ENCODE measurements at regions of chr17 and their contacts with region 1.

Region 1: DNA sequence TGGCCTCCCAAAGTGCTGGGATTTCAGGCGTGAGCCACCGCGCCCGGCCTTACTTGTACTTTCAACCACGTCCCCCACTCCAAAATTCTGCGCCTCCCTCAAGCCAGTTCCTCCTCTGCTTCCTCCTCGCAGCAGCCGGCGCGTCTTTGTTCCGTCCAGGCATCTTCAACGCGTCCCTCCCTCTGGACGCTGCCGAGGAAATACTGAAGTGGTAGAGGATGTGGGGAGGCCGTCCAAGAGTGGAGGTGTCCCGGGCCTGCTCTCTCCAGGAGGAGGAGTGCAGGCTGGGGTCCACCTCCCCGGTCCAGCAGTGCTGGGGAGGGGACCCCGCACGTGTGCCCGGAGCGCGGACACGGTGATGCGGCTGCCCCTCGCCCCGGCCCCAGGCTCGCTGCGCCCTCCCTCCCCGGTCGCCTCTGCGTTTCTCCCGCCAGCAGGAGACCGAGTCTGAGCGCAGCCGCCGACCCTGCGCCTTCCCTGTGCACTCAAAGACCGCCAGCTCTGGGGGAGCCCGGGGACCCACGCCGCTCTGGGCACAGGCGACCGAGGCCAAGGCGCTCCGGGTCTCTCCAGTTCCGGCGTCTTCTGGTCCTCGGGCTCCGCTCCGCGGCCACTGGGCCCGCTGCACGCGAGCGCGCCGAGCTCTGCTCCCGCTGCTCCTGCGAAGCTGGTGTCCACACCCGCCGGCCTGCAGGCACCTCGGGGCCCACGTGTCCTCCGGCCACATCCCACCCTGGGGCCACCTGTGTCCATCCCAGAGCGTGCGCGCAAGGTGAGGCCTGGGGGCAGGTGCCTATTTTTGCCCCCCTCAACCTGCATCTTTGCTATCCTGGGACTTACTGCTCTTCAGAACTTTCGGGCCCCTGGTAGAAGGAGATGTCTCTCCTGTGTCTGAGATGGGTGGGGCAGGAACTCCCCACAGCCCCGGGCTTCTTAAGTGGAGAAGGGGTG is 31.7 kb downstream of the OSBPL7 start:
- DNase-seq: peak; percentile 72
- ATAC-seq: peak; percentile 98
- H3K4me3 ChIP-seq: peak overlapping the region; percentile 57; the same call in 1 of the 2 replicates
- H3K27ac ChIP-seq: no peak overlapping the region
- H3K4me1 ChIP-seq: no peaks in the 10 kb centered on the region
- H3K27me3 ChIP-seq: peaks cover 77% of the 10 kb centered on the region
- CTCF ChIP-seq: peak; percentile 58

Region 2: DNA sequence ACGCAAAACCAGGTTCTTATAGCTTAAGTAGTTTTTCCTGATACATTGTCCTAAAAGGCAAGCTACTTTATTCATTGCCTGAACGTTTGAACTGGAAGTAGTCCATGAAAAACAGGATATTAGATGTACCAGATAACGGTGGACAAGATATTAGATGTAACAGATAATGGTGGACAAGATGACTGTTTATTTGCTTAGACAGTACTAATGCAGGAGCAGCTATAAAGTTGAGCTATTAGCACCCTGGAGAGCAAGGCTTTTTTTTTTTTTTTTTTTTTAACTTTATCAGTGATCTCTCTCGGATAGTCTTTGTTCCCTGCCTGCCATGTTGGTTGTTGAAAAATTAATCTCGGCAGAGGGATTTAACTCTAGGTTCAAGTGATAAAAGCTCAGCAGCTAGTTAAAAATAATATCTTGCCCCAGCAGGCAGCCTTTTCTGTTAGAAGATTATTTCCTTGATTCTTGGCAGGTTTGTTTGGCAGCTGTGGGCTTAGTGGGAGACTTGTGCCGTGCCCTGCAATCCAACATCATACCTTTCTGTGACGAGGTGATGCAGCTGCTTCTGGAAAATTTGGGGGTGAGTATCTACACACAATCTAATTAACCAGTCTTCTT is 113.2 kb before region 1 on chr17:
- CTCF ChIA-PET with region 1: interaction called, 15 read pairs
- POLR2A ChIA-PET with region 1: no interaction called
- intact Hi-C with region 1: no loop called
- DNase-seq: no peak
- ATAC-seq: no peak
- H3K4me3 ChIP-seq: no peak overlapping the region
- H3K27ac ChIP-seq: no peak overlapping the region
- H3K4me1 ChIP-seq: no peaks in the 10 kb centered on the region
- H3K27me3 ChIP-seq: no peaks in the 10 kb centered on the region
- CTCF ChIP-seq: no peak

Region 3: DNA sequence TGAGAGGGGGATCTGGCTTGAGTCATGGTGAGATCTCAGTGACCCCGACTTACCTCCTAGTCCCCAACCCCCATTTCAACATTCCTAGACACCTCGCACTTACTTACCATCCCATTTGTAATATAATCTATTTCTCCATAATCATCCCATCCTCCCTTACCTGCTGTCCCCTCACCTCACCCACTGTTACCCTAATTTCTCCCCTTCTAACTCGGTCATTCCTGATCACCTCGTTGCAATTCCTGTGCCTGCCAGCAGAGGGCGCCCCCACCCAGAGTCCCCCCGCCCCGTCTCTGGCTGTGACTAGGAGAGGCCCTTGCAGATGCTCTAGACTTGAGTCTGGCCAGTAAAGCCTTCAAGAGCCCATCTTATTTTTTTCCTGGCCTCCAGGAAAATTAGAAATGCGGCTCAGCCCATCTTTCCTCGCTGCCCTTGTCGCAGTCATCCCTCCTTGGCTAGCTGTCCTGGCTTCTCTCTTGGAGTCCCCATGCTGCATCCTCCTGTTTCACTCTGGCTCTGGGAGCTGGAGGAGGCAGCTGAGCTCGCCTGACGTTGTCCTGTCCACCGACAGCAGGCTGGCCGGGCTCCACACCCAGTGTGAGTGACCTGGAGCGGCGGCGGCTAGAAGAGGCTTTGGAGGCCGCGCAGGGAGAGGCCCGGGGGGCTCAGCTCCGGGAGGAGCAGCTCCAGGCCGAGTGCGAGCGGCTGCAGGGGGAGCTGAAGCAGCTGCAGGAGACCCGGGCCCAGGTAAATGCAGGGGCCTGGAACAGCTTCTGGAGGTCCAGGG is 90.9 kb before region 1 on chr17:
- CTCF ChIA-PET with region 1: interaction called, 11 read pairs
- POLR2A ChIA-PET with region 1: no interaction called
- intact Hi-C with region 1: no loop called
- DNase-seq: peak; percentile 75
- ATAC-seq: peak; percentile 26
- H3K4me3 ChIP-seq: no peak overlapping the region
- H3K27ac ChIP-seq: no peak overlapping the region
- H3K4me1 ChIP-seq: peaks cover 7% of the 10 kb centered on the region; the same call in 1 of the 2 replicates
- H3K27me3 ChIP-seq: no peaks in the 10 kb centered on the region
- CTCF ChIP-seq: peak; percentile 99

Region 4: DNA sequence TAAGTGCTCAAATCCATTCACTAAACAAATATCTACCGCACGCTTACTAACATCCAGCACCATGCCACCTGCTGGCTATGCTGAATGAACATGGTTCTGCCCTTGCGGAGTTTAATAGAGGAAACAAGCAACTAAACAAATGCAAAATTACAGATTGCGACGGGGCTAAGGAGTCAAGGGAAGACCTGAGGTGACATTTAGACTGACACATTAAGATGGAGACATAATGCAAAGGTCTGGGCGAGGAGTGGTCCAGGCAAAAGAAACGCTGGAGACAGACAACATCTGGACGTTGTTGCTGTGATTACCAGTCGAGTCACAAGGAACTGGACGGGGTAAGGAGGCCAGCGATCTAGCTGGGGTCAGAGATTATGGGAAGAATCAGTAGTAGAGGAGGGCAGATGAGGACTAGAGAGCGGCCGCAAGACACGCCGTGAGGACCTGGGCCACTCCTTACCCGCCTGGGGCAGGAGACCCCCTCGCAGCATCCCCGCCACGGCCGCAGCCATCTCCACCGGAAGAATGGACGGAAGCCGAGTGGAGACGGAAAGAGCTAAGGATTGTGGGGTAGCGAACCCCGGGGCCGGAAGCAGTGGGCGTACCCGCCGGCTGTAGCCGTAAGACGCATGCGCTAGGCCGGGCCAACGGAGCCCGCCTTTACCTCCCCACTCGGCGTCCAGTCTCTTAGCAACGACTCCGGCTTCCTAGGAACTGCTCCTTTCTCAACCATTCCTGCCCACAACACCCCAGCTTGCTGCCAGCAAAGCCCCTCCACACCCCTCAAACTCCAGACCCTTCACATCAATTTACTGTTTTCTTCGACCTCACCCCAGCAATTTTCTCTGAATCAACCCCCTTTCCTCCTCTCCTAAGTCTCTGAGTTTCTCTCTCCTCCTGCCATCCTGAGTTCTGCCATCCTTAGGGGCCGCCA is 41.4 kb after region 1 on chr17 and contains the starts of genes LRRC46 and MRPL10:
- CTCF ChIA-PET with region 1: no interaction called
- POLR2A ChIA-PET with region 1: interaction called, 11 read pairs
- intact Hi-C with region 1: no loop called
- DNase-seq: peak; percentile 96
- ATAC-seq: peak; percentile 90
- H3K4me3 ChIP-seq: peak within 1 kb of the TSS; percentile 71
- H3K27ac ChIP-seq: peak within 1 kb of the TSS; percentile 11
- H3K4me1 ChIP-seq: peaks cover 17% of the 10 kb centered on the region
- H3K27me3 ChIP-seq: no peaks in the 10 kb centered on the region
- CTCF ChIP-seq: peak; percentile 86
- total RNA-seq, gene LRRC46: 0.44 and 1.2 TPM in 2 replicates
- total RNA-seq, gene MRPL10: 54.5 and 74.2 TPM in 2 replicates

Measured in PC-3 (cell line).